ENCODE measurements at regions of chr1 and their contacts with region 1.

Region 1: GRCh38 chr1:224851210-224851847 is 78.1 kb upstream of the DNAH14 start:
- DNase-seq: peak; percentile 37
- ATAC-seq: peak; percentile 70
- H3K4me3 ChIP-seq: no peak overlapping the region
- H3K27ac ChIP-seq: no peak overlapping the region
- H3K4me1 ChIP-seq: no peaks in the 10 kb centered on the region
- H3K27me3 ChIP-seq: peaks cover 2% of the 10 kb centered on the region; the same call in 1 of the 2 replicates
- CTCF ChIP-seq: peak; percentile 64
- POLR2A ChIP-seq: no peak
- RAD21 ChIP-seq: peak; percentile 67

Region 2: DNA sequence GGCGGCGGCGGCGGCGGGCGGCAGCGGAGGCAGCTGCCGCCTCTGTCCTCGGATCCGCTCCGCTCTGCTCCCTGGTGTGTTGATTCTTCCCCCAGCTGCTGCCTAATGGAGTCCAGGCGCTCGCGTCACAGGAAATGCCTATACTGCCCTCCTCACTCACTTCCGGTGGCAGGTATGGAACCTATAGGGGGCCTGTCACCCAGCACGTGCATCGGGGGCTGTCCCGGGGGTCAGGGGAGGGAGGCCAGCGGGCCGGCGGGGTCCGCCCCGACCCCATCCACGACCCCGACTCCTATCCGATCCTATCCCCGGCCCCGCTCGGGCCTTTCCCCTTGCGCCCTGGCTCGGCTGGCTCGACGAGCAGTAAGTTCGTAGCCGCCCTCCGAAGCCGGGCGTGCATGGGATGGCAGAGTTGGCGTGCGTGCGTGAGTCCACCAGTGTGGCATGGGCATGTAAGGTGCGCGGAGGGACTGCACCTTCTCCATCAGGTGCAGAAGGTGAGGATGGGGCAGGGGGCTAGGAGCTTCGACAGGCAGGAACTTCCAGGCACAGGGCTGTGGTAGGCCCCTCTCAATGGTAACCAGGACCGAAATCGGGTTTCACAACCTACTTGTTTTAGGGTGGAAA is 416.5 kb before region 1 on chr1 and contains the start of gene WDR26:
- CTCF ChIA-PET with region 1: no interaction called
- POLR2A ChIA-PET with region 1: no interaction called
- dilution Hi-C with region 1: no loop called
- in situ Hi-C with region 1: no loop called
- intact Hi-C with region 1: loop called (anchors 2 kb)
- DNase-seq: peak; percentile 80
- ATAC-seq: peak; percentile 74
- H3K4me3 ChIP-seq: peak within 1 kb of the TSS; percentile 77
- H3K27ac ChIP-seq: peak within 1 kb of the TSS; percentile 99
- H3K4me1 ChIP-seq: peaks cover 4% of the 10 kb centered on the region; the same call in 1 of the 2 replicates
- H3K27me3 ChIP-seq: no peaks in the 10 kb centered on the region
- CTCF ChIP-seq: 0 out of 2 replicates have a peak, but pooled peaks have one; percentile 8
- POLR2A ChIP-seq: peak; percentile 90
- RAD21 ChIP-seq: no peak
- total RNA-seq, gene WDR26: 23.8 and 41.4 TPM in 2 replicates

Region 3: DNA sequence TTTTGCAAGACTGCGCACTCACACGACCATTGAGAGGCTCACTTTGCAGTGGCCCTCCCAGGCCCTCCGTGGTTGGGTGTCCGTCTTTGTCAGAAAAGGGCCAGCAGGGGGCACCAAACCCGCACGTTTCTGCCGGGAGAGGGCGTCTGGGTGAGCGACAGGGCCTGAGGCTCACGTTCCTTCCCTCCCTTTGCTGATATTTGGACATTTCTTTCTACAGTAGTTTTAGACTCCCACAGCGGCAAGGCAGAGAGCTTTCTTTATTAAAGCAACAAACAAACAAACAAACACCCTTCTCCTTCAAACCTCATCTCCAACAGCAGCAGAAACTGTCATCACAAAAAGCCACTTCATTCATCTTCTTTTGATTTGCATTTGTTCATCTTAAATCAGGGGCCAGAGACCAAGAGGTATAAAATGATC is 337.5 kb before region 1 on chr1:
- CTCF ChIA-PET with region 1: interaction called, 41 read pairs
- POLR2A ChIA-PET with region 1: no interaction called
- dilution Hi-C with region 1: no loop called
- in situ Hi-C with region 1: loop called (anchors 5 kb)
- intact Hi-C with region 1: loop called (anchors 1 kb)
- DNase-seq: peak; percentile 74
- ATAC-seq: peak; percentile 82
- H3K4me3 ChIP-seq: no peak overlapping the region
- H3K27ac ChIP-seq: no peak overlapping the region
- H3K4me1 ChIP-seq: peaks cover 15% of the 10 kb centered on the region
- H3K27me3 ChIP-seq: no peaks in the 10 kb centered on the region
- CTCF ChIP-seq: peak; percentile 98
- POLR2A ChIP-seq: peak; percentile 53; the same call in 1 of the 2 replicates
- RAD21 ChIP-seq: peak; percentile 99

Region 4: DNA sequence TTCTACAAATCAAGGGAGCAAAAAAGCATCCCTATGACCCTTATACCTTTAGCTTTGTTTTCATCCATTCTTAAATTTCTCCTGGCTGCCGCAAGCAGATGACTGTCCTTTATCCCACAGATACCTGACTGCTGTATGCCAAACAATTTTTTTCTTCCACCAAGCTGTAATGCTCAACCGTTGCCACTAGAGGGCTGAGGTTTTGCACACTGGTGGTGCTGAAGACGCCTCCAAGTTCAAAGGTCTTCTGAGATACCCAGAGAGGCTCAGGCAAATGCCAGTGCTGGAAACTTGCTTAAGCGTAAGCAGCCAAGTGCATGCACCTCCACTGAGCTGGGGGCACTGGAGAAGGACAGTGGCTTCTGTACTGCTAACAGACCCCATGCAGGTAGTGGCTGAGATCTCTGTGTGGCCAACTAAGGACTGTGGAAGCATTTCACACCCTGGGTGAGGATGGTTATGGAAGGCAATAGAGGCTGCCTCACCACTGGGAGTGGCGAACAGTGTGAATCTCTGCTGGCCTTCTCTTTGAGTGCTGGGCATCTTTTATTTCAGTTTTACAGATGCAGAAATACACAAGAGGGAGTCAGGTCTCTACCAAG is 206.7 kb before region 1 on chr1:
- CTCF ChIA-PET with region 1: interaction called, 9 read pairs
- POLR2A ChIA-PET with region 1: no interaction called
- dilution Hi-C with region 1: no loop called
- in situ Hi-C with region 1: loop called (anchors 10 kb)
- intact Hi-C with region 1: loop called (anchors 1 kb)
- DNase-seq: peak; percentile 55
- ATAC-seq: peak; percentile 96
- H3K4me3 ChIP-seq: no peak overlapping the region
- H3K27ac ChIP-seq: no peak overlapping the region
- H3K4me1 ChIP-seq: peaks cover 6% of the 10 kb centered on the region; the same call in 1 of the 2 replicates
- H3K27me3 ChIP-seq: no peaks in the 10 kb centered on the region
- CTCF ChIP-seq: peak; percentile 74
- POLR2A ChIP-seq: no peak
- RAD21 ChIP-seq: peak; percentile 65

Region 5: DNA sequence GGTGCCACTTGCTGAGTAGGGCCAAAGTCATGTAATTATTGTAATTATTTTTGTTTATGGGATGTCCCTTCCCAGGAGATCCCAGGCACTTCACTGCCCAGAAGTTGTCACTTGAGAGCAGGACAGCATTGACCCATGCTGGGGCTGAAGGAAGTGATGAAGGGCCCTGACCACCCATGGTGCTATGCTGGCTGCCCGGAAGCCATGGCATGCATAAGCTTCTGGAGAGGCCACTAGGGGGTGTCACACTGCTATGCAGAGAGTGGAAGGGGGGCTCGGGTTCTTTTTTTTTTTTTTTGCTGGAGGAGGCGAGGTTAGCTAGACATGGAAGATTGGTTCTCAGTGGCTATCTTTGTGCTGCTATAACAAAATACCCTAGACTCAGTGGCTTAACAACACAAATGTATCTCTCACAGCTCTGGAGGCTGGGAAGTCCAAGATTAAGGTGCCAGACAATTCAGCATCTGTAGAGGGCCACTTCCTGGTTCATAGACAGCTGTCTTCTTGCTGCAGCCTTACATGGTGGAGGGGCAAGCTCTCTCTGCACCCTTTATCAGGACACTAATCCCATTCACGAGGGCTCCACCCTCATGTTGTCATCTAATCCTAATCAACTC is 150.3 kb before region 1 on chr1:
- CTCF ChIA-PET with region 1: interaction called, 5 read pairs
- POLR2A ChIA-PET with region 1: no interaction called
- dilution Hi-C with region 1: no loop called
- in situ Hi-C with region 1: no loop called
- intact Hi-C with region 1: loop called (anchors 1 kb)
- DNase-seq: peak; percentile 7
- ATAC-seq: peak; percentile 56; the same call in 1 of the 2 replicates
- H3K4me3 ChIP-seq: no peak overlapping the region
- H3K27ac ChIP-seq: no peak overlapping the region
- H3K4me1 ChIP-seq: no peaks in the 10 kb centered on the region
- H3K27me3 ChIP-seq: no peaks in the 10 kb centered on the region; the same call in 1 of the 2 replicates
- CTCF ChIP-seq: peak; percentile 39
- POLR2A ChIP-seq: no peak
- RAD21 ChIP-seq: peak; percentile 45

Region 6: DNA sequence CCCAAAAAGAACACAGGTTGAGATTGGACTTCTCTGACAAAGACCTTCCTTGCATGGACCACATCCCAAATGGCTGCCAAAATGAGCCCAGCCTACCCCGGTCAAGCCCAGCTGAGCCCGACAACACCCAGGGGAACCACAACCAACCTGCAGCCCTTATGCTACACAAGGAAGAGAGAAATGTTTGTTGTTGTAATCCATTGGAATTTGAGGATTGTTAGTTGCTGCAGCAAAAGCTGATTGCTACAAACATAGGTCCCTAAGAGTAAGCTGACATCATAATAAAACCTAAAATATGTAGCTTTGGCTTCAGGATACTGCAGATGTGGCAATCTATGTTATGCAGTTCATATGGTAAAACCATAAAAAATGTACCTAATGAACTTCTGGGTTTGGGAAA is 12.6 kb after region 1 on chr1:
- CTCF ChIA-PET with region 1: interaction called, 13 read pairs
- POLR2A ChIA-PET with region 1: no interaction called
- dilution Hi-C with region 1: no loop called
- in situ Hi-C with region 1: no loop called
- intact Hi-C with region 1: no loop called
- DNase-seq: peak; percentile 7
- ATAC-seq: no peak
- H3K4me3 ChIP-seq: no peak overlapping the region
- H3K27ac ChIP-seq: no peak overlapping the region
- H3K4me1 ChIP-seq: no peaks in the 10 kb centered on the region; the same call in 1 of the 2 replicates
- H3K27me3 ChIP-seq: no peaks in the 10 kb centered on the region
- CTCF ChIP-seq: no peak
- POLR2A ChIP-seq: no peak
- RAD21 ChIP-seq: no peak